ENCODE measurements at regions of chr5 and their contacts with region 1.

Region 1: GRCh38 chr5:108381954-108382783 is at the start of gene FBXL17:
- DNase-seq: peak; percentile 94
- H3K4me3 Mint-ChIP-seq: peak within 1 kb of the TSS; percentile 71
- H3K27ac Mint-ChIP-seq: peak within 1 kb of the TSS; percentile 88
- H3K4me1 Mint-ChIP-seq: peaks cover 28% of the 10 kb centered on the region
- H3K27me3 Mint-ChIP-seq: no peaks in the 10 kb centered on the region
- CTCF ChIP-seq: no peak
- total RNA-seq, gene FBXL17: 18.2 and 18.3 TPM in 2 replicates

Region 2: DNA sequence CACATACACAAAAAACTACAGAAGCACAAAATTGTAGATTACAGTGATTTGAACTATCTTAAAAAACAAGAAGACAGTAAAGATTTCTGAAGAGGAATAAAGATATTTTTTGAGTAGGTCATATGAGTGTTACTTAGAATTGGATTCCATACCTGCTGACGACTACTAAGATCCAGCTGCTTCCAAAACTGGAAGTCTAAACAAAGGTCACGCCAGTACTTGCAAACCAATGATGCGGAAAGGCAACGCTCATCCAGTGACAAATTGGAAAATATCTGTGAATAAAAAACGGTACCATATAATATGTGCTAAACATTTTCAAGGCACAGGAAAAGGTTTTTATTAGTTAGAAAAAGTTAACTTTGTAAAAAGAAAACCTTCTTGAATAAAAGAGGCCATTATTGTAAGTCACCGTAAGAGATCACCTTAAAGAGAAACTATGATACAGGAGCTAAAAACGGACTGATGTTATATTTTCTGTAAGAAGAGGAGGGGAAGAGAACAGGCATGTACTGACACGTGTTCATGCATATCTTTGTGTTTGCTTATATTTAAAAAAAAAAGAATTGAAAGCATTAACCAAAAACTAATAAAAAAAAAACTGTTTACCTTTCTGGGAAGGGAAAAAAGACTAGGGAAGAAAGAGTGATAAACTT is 14.4 kb before region 1 on chr5:
- CTCF ChIA-PET with region 1: interaction called, 3 read pairs
- POLR2A ChIA-PET with region 1: interaction called, 81 read pairs
- intact Hi-C with region 1: no loop called
- DNase-seq: no peak
- H3K4me3 Mint-ChIP-seq: peak overlapping the region; percentile 60
- H3K27ac Mint-ChIP-seq: no peak overlapping the region
- H3K4me1 Mint-ChIP-seq: peaks cover 13% of the 10 kb centered on the region
- H3K27me3 Mint-ChIP-seq: no peaks in the 10 kb centered on the region
- CTCF ChIP-seq: no peak

Measured in MCF 10A (cell line).